Activated CD4-positive, alpha-beta T cell treated with anti-CD3 and anti-CD28 coated beads for 36 hours (primary cell): ENCODE measurements at regions of chr5 and their contacts with region 1.

Region 1: DNA sequence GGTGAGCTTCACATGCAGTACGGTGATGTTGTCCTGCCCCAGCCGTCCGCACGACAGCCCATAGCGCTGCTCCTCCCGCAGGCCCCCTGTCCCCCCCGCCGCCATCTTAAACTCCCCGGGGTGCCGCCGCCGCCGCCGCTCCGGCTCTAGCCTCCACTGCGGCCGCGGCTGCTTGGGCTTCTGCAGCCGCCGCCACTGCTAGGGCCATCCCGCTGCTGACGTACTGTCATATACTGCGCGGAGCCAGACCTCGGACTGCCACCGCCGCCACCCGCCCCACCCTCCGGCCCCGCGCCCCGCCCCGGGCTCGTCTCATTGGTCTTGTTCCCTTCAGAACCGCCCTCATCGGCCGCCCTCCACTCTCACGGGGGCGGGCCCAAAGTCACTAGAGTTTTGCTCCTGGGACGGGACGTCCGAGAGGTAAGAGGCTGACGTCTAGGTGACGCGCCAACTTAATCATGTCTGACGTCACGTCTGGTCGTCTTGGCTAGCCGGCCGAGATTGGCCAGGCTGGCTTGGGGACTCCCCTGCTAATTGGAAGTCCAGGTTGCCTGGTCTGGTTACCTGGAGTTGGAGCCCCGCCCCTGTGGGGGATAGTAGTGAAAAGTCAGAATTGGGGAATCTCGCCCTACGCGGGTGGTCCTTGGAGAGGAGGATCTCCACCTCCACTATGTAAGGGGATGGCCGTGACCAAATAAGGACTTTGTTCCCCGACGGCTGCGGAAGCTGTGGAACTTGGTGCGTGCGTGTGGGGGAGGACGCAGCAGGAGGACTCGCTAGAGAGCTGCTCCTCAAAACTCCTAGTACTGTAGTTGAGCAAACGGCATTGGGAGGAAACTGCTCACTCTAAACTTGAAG is at the start of gene ELL2:
- DNase-seq: peak; percentile 99
- ATAC-seq: peak; percentile 89
- H3K4me3 Mint-ChIP-seq: peak within 1 kb of the TSS; percentile 97
- H3K27ac Mint-ChIP-seq: peak within 1 kb of the TSS; percentile 96
- H3K4me1 Mint-ChIP-seq: peaks cover 51% of the 10 kb centered on the region
- H3K27me3 Mint-ChIP-seq: peaks cover 3% of the 10 kb centered on the region
- total RNA-seq, gene ELL2: 87.6 to 131 TPM

Region 2: GRCh38 chr5:95631991-95632675 is 329.7 kb before region 1 on chr5:
- CTCF ChIA-PET with region 1: no interaction called
- POLR2A ChIA-PET with region 1: no interaction called
- intact Hi-C with region 1: loop called in 1 of 2 experiments (anchors 5 kb)
- DNase-seq: peak; percentile 85
- ATAC-seq: peak; percentile 99
- H3K4me3 Mint-ChIP-seq: peak overlapping the region; percentile 22
- H3K27ac Mint-ChIP-seq: peak overlapping the region; percentile 94
- H3K4me1 Mint-ChIP-seq: peaks cover 22% of the 10 kb centered on the region
- H3K27me3 Mint-ChIP-seq: peaks cover 1% of the 10 kb centered on the region

Region 3: GRCh38 chr5:95927927-95928723 is 33.7 kb before region 1 on chr5:
- CTCF ChIA-PET with region 1: interaction called, 3 read pairs
- POLR2A ChIA-PET with region 1: no interaction called
- intact Hi-C with region 1: loop called in 1 of 2 experiments (anchors 2 kb)
- DNase-seq: no peak
- ATAC-seq: peak; percentile 64
- H3K4me3 Mint-ChIP-seq: no peak overlapping the region
- H3K27ac Mint-ChIP-seq: peak overlapping the region; percentile 75
- H3K4me1 Mint-ChIP-seq: peaks cover 21% of the 10 kb centered on the region
- H3K27me3 Mint-ChIP-seq: no peaks in the 10 kb centered on the region

Region 4: DNA sequence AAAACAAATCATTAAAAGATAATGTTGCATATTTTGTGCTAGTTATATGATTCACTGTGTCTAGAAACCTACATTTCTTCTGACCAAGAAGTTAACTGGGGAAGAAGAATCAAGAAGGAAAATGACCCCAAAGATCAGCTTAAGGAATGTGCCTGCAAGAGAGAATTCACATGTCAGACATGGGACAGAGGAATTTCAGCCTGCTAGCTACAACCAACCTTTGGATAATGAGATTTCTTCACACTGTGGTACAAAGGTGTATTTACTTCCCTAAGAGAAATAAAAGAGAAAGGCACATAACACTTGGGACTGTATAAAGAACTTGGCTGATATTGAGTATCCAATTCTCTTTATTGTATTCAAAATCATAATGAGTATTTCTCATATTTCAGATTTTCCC is 39.4 kb after region 1 on chr5:
- CTCF ChIA-PET with region 1: no interaction called
- POLR2A ChIA-PET with region 1: no interaction called
- intact Hi-C with region 1: no loop called
- DNase-seq: no peak
- ATAC-seq: no peak
- H3K4me3 Mint-ChIP-seq: no peak overlapping the region
- H3K27ac Mint-ChIP-seq: no peak overlapping the region
- H3K4me1 Mint-ChIP-seq: peaks cover 7% of the 10 kb centered on the region
- H3K27me3 Mint-ChIP-seq: peaks cover 5% of the 10 kb centered on the region

Region 5: GRCh38 chr5:96023518-96023917 is 61.7 kb after region 1 on chr5:
- CTCF ChIA-PET with region 1: no interaction called
- POLR2A ChIA-PET with region 1: no interaction called
- intact Hi-C with region 1: no loop called
- DNase-seq: no peak
- ATAC-seq: no peak
- H3K4me3 Mint-ChIP-seq: no peak overlapping the region
- H3K27ac Mint-ChIP-seq: no peak overlapping the region
- H3K4me1 Mint-ChIP-seq: no peaks in the 10 kb centered on the region
- H3K27me3 Mint-ChIP-seq: peaks cover 2% of the 10 kb centered on the region

Region 6: DNA sequence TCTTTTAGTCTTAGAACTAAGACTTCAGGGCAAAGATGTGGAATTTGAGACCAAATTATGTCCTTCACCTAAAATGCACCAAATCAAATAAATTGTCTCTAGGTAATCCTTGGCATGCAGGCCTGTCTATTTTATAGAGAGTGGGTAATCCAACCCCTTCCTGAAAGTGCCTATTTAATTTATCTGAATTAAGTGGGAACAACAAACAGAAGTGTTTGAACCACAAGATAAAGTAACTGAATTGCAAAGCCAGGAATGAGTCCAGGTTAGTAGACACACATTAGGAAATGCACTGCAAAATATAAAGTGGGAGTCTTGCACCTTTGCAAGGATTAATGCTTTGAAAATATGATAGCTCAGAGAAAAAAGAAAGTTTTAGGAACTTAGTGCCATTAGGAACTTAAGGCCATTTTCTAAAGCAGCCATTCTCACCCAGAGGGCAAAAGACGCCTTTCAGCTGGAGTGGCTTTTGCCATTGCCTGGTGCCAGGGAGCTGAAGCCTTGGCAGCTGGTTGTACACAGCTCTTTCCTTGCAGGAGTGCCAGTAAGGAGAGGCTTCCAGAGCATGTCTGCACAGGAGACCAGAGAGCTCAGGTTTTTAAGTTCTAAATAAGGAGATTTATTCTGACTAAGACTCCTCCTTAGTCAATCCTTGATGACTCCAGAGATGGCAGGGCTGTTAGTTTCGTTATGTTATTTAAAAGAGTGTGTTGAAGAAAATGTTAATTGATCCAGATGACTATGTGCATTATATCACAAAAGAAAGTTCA is 151.5 kb after region 1 on chr5:
- CTCF ChIA-PET with region 1: no interaction called
- POLR2A ChIA-PET with region 1: no interaction called
- intact Hi-C with region 1: loop called (anchors 1 kb)
- DNase-seq: no peak
- ATAC-seq: peak; percentile 71
- H3K4me3 Mint-ChIP-seq: no peak overlapping the region
- H3K27ac Mint-ChIP-seq: peak overlapping the region; percentile 84
- H3K4me1 Mint-ChIP-seq: peaks cover 35% of the 10 kb centered on the region
- H3K27me3 Mint-ChIP-seq: peaks cover 3% of the 10 kb centered on the region

Region 7: GRCh38 chr5:96279801-96280542 is 318.1 kb after region 1 on chr5:
- CTCF ChIA-PET with region 1: no interaction called
- POLR2A ChIA-PET with region 1: no interaction called
- intact Hi-C with region 1: loop called (anchors 2 to 5 kb)
- DNase-seq: peak; percentile 48
- ATAC-seq: peak; percentile 96
- H3K4me3 Mint-ChIP-seq: no peak overlapping the region
- H3K27ac Mint-ChIP-seq: peak overlapping the region; percentile 35
- H3K4me1 Mint-ChIP-seq: peaks cover 23% of the 10 kb centered on the region
- H3K27me3 Mint-ChIP-seq: peaks cover 30% of the 10 kb centered on the region

Region 8: DNA sequence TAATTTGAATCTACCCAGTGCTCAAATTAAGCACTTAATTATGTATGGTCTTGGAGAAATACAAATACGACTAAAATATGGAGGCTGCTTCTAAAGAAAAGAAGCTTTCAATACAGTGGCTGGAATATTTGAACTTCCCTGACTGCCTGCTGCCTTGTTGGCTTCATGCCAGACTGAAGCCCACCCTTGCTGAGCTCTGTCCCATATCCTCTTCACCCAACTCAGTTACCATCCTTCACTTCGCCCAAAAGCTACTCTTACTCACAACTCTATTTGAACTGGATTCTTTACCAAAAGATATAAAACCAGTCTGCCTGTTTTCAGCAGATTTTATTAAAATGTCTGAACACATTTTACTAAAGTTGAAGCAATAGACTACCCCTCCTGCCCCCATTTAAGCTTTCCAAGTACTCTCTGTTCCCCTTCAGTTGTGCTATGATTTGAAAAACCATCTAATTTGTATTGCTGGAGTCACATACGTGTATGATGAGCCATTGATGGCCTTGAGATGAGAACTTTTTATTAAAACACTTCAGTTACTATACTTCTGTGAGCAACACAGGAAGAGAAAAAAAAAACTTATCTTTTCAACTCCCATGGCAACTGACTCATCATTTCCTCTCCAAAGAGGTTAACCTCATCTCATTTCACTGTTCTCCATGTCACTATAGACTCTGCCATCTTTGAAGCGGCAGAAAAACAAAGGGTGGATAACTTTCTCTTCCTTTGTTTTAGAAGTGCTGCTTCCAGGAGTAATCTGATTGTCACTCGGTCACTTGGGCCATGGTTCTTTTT is 575.3 kb after region 1 on chr5:
- CTCF ChIA-PET with region 1: no interaction called
- POLR2A ChIA-PET with region 1: no interaction called
- intact Hi-C with region 1: loop called in 1 of 2 experiments (anchors 5 kb)
- DNase-seq: no peak
- ATAC-seq: peak; percentile 86
- H3K4me3 Mint-ChIP-seq: peak overlapping the region; percentile 1
- H3K27ac Mint-ChIP-seq: peak overlapping the region; percentile 82
- H3K4me1 Mint-ChIP-seq: peaks cover 32% of the 10 kb centered on the region
- H3K27me3 Mint-ChIP-seq: no peaks in the 10 kb centered on the region

Region 9: DNA sequence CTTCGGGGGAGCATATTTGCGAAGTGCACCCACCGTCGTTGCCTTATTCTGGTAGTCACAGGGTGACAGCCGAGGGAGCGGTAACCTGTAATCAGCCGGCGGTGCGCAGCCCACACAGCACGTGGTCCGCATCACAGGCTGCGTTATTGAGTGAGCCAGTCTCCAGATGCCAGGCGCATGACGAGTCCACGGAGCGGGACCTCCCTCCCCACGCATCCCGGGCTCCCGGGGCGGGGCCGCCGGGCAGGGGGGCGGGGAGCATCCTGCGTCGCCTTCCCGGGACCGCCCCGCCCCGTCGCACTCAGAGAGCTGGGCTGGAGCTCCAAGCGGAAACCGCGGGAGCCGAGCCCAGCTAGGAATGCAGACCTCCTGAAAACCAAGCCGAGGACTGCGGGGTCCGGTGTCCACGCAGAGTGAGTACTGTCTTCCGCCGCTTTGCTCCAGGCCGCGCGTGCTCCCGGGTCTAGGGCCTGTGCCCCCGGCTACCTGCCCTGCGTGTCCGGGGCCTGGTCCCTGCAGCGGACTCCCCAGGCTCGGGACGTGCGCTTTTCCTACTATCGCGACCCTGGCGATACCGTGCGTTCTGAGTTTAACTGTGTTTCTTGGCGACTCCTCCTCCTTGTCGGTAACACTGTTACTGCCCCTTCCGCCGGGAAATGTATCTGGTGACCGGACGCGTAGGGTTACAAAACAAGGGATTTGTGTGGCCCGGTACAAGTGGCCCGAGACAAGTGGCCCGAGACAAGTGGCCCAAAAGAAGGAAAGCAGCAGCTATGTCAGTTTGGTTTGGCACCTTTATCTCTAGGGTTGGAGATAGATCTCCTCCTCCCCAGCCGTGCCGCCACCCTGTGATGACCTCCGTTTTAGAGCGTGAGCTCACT is 740.9 kb after region 1 on chr5:
- CTCF ChIA-PET with region 1: no interaction called
- POLR2A ChIA-PET with region 1: no interaction called
- intact Hi-C with region 1: loop called in 1 of 2 experiments (anchors 2 kb)
- DNase-seq: peak; percentile 92
- ATAC-seq: peak; percentile 78
- H3K4me3 Mint-ChIP-seq: peak overlapping the region; percentile 91
- H3K27ac Mint-ChIP-seq: peak overlapping the region; percentile 81
- H3K4me1 Mint-ChIP-seq: peaks cover 51% of the 10 kb centered on the region
- H3K27me3 Mint-ChIP-seq: no peaks in the 10 kb centered on the region